Lower leg skin (tissue), 4 donors: ENCODE measurements at regions of chr5 and their contacts with region 1.

Region 1: DNA sequence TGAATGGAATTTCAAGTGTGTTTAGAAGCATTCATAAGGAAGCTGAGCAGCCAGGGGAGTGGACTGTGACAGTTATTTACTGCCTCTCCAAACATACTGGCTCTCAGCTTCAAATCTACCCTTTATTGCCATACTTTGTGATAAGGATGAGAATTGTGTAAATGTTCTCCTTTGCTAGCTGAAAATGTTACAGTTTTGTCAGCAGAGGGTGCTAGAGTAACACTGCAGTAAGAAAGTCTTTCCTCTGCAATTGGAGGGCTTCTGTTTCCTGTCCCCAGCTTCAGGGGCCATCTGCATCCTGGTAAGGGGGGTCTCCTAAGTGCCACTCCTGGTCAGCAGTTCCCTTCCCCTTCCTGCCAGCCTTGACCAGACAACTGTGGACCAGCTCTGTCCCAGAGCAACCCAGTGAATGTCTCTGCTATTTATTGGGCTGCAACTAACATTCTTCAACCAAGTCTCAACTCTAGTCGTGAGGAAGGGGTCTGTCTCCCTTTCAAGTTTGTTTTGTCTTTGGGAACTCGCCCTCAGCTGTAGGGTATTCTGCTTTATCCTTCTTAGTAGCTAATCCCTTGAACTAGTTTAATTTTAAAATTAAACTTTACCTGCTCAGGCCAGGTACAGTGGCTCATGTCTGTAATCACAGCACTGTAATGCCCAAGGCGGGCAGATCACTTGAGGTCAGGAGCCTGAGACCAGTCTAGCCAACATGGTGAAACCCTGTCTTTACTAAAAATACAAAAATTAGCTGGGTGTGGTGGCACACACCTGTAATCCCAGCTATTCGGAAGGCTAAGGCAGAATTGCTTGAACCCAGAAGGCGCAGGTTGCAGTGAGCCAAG is 45.3 kb downstream of the RAPGEF6 start:
- DNase-seq: no peak
- H3K4me3 ChIP-seq: no peak overlapping the region
- CTCF ChIP-seq: peak in 1 of 3 donors; percentile 53
- POLR2A ChIP-seq: no peak

Region 2: GRCh38 chr5:130206686-130207085 is 1383.0 kb before region 1 on chr5:
- intact Hi-C with region 1: no loop called
- DNase-seq: no peak
- H3K4me3 ChIP-seq: no peak overlapping the region
- CTCF ChIP-seq: no peak
- POLR2A ChIP-seq: no peak

Region 3: GRCh38 chr5:131475541-131475941 is 114.2 kb before region 1 on chr5:
- intact Hi-C with region 1: no loop called
- DNase-seq: no peak
- H3K4me3 ChIP-seq: no peak overlapping the region
- CTCF ChIP-seq: no peak
- POLR2A ChIP-seq: no peak

Region 4: GRCh38 chr5:132007399-132008165 is 417.9 kb after region 1 on chr5:
- intact Hi-C with region 1: loop called (anchors 10 kb)
- DNase-seq: peak; percentile 69 to 89
- H3K4me3 ChIP-seq: no peak overlapping the region
- CTCF ChIP-seq: peak in 1 of 3 donors; percentile 16
- POLR2A ChIP-seq: no peak